ENCODE measurements at regions of chr1 and their contacts with region 1.

Region 1: DNA sequence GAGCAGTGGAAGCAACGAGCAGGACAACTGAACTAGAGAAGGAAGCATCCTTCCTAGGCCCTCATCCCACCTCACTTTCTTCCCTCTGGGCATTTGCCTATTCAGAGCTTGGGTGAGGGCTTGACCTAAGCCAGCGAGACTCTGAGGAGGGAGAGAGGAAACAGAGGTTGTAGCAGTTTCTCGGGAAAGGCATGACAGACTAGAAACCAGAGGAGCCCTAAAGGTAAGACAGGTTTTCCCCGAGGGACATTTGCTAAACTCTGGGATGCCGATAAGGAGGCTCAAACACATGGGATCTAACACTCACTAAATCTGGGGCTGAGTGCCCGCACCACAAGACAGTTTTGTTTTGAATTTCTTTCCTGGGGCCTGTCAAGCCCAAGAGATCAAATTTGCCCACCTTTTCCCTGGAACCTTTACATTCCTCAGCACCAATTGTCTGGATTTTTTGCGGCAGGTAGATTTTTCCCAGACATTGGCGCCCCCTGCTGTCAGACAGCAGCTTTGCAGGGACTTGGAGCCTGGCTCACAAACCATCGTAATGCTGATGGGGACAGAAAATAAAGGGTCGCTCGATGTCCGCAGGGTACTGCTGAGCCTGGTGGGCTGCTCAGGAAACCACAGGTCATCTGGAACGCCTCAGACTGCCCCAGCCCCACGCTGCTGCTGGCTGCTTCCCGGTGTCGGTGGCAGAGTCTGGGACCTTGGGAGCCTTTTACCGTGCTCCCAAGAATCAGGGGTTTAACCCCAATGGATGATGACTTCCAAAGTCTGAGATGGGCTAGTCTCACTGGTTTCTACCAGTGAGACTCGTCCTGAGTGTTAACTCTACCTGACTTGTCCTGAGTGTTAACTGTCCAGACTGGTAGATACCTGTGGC is 23.4 kb upstream of the TSPAN2 start:
- DNase-seq: peak in 4 of 5 donors; percentile 63 to 77 (median 76)
- H3K4me3 ChIP-seq: no peak overlapping the region
- H3K27ac ChIP-seq: no peak overlapping the region
- H3K4me1 ChIP-seq: no peaks in the 10 kb centered on the region
- H3K27me3 ChIP-seq: no peaks in the 10 kb centered on the region
- CTCF ChIP-seq: peak; percentile 96

Region 2: GRCh38 chr1:114979278-114979891 is 133.4 kb before region 1 on chr1:
- intact Hi-C with region 1: loop called (anchors 5 kb)
- DNase-seq: peak in 4 of 5 donors; percentile 52 to 78 (median 63)
- H3K4me3 ChIP-seq: no peak overlapping the region
- H3K27ac ChIP-seq: no peak overlapping the region
- H3K4me1 ChIP-seq: no peaks in the 10 kb centered on the region
- H3K27me3 ChIP-seq: no peaks in the 10 kb centered on the region
- CTCF ChIP-seq: peak; percentile 83

Region 3: GRCh38 chr1:115296981-115297380 is 184.2 kb after region 1 on chr1:
- intact Hi-C with region 1: no loop called
- DNase-seq: no peak
- H3K4me3 ChIP-seq: no peak overlapping the region
- H3K27ac ChIP-seq: no peak overlapping the region
- H3K4me1 ChIP-seq: peaks cover 0 to 2% (median 0%) of the 10 kb centered on the region in 3 donors
- H3K27me3 ChIP-seq: no peaks in the 10 kb centered on the region
- CTCF ChIP-seq: no peak